ENCODE measurements at regions of chr15 and their contacts with region 1.

Region 1: GRCh38 chr15:74995241-74995778 is at the start of gene SCAMP5:
- DNase-seq: peak; percentile 82 to 96 (median 88)
- ATAC-seq: peak; percentile 99
- H3K4me3 ChIP-seq: peak within 1 kb of the TSS; percentile 75
- H3K4me3 Mint-ChIP-seq: peak within 1 kb of the TSS; percentile 93
- H3K27ac ChIP-seq: no peak within 1 kb of the TSS
- H3K27ac Mint-ChIP-seq: peak within 1 kb of the TSS; percentile 21
- H3K4me1 ChIP-seq: peaks cover 16% of the 10 kb centered on the region
- H3K4me1 Mint-ChIP-seq: peaks cover 22% of the 10 kb centered on the region
- H3K27me3 ChIP-seq: peaks cover 24 to 26% of the 10 kb centered on the region in 2 experiments
- H3K27me3 Mint-ChIP-seq: peaks cover 28% of the 10 kb centered on the region
- CTCF ChIP-seq: no peak
- total RNA-seq, gene SCAMP5: 5.7 to 6.4 TPM

Region 2: DNA sequence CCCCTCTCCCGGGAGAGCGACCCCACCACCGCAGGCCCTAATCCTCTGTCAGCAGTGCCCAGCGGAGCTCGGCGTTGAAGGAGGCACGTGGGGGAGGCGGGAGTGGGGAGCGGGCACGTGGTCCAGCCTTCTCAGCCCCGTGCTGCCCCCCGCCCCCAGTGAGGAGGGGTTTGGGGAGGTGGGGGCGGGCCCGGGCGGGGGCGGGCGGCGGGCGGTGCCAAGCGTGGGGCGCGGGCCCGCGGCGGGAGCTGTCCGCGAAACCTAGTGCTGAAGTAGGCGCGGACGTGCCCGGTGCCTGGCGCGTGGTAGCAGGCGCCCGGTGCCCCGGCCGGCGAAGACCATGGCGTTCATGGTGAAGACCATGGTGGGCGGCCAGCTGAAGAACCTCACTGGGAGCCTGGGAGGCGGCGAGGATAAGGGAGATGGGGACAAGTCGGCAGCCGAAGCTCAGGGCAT is 168.9 kb before region 1 on chr15 and contains the start of gene CPLX3:
- CTCF ChIA-PET with region 1: no interaction called
- POLR2A ChIA-PET with region 1: no interaction called
- intact Hi-C with region 1: loop called in 1 of 2 experiments (anchors 2 kb)
- DNase-seq: peak in 13 of 14 experiments; percentile 27 to 76 (median 46)
- ATAC-seq: peak; percentile 78
- H3K4me3 ChIP-seq: no peak within 1 kb of the TSS
- H3K4me3 Mint-ChIP-seq: no peak within 1 kb of the TSS
- H3K27ac ChIP-seq: no peak within 1 kb of the TSS
- H3K27ac Mint-ChIP-seq: no peak within 1 kb of the TSS
- H3K4me1 ChIP-seq: peaks cover 6% of the 10 kb centered on the region
- H3K4me1 Mint-ChIP-seq: no peaks in the 10 kb centered on the region
- H3K27me3 ChIP-seq: peaks cover 20% of the 10 kb centered on the region in 2 experiments
- H3K27me3 Mint-ChIP-seq: peaks cover 33% of the 10 kb centered on the region
- CTCF ChIP-seq: no peak
- total RNA-seq, gene CPLX3: 0.16 to 0.53 TPM

Region 3: DNA sequence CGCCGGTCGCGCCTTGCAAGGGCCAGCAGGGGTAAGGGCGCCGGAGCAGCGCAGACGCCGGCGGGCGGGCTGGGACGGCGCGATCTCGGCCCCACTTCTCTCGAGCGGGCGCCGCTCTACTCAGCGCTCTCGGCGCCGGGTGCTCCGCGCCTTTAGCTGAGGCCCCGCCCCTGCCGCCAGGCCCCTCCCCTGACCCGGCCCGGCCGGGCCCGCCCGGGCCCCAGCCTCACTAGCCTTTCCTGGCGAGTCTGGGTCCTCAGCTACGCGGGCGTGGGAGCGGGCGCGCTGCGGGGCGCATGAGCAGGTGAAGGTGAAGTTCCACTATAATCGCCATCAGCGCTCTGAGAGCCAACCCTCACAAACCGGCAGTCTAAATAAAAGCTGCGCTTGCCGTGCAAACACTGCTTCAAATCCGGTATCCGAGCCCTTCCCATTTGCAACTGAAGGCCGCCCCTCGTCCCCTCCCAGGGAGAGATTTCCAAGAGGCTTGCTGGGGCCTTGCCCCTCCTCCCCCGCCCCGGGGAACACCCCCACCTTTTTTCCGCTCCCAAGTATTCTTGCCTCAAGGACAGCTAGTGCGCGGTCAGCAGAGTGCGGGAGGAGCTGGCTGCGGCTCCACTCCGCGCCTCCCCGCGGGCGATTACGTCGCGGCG is 38.5 kb before region 1 on chr15 and contains the start of gene RPP25:
- CTCF ChIA-PET with region 1: no interaction called
- POLR2A ChIA-PET with region 1: interaction called, 9 read pairs
- intact Hi-C with region 1: loop called in 1 of 2 experiments (anchors 2 kb)
- DNase-seq: peak; percentile 24 to 78 (median 62)
- ATAC-seq: peak; percentile 84
- H3K4me3 ChIP-seq: peak within 1 kb of the TSS; percentile 60
- H3K4me3 Mint-ChIP-seq: peak within 1 kb of the TSS; percentile 83
- H3K27ac ChIP-seq: no peak within 1 kb of the TSS
- H3K27ac Mint-ChIP-seq: no peak within 1 kb of the TSS
- H3K4me1 ChIP-seq: peaks cover 41% of the 10 kb centered on the region
- H3K4me1 Mint-ChIP-seq: peaks cover 21% of the 10 kb centered on the region
- H3K27me3 ChIP-seq: peaks cover 36 to 37% of the 10 kb centered on the region in 2 experiments
- H3K27me3 Mint-ChIP-seq: peaks cover 35% of the 10 kb centered on the region
- CTCF ChIP-seq: no peak
- total RNA-seq, gene RPP25: 0.14 to 0.45 TPM

Region 4: GRCh38 chr15:75023181-75023871 is 28.0 kb after region 1 on chr15 and contains the start of gene PPCDC:
- CTCF ChIA-PET with region 1: no interaction called
- POLR2A ChIA-PET with region 1: interaction called, 20 read pairs
- intact Hi-C with region 1: loop called in 1 of 2 experiments (anchors 1 kb)
- DNase-seq: peak; percentile 83 to 96 (median 90)
- ATAC-seq: peak; percentile 100
- H3K4me3 ChIP-seq: peak within 1 kb of the TSS; percentile 81
- H3K4me3 Mint-ChIP-seq: peak within 1 kb of the TSS; percentile 99
- H3K27ac ChIP-seq: peak within 1 kb of the TSS; percentile 46 to 50
- H3K27ac Mint-ChIP-seq: peak within 1 kb of the TSS; percentile 94
- H3K4me1 ChIP-seq: peaks cover 20% of the 10 kb centered on the region
- H3K4me1 Mint-ChIP-seq: peaks cover 23% of the 10 kb centered on the region
- H3K27me3 ChIP-seq: no peaks in the 10 kb centered on the region
- H3K27me3 Mint-ChIP-seq: no peaks in the 10 kb centered on the region
- CTCF ChIP-seq: no peak
- total RNA-seq, gene PPCDC: 5.5 to 5.8 TPM

Measured in CD4-positive, alpha-beta T cell (primary cell).